ENCODE measurements at regions of chr6 and their contacts with region 1.

Region 1: GRCh38 chr6:14075095-14075503 is 42.5 kb upstream of the CD83 start:
- DNase-seq: no peak
- ATAC-seq: peak; percentile 79
- H3K4me3 ChIP-seq: peak overlapping the region; percentile 60
- H3K27ac ChIP-seq: peak overlapping the region; percentile 97
- H3K4me1 ChIP-seq: peaks cover 25% of the 10 kb centered on the region
- H3K27me3 ChIP-seq: no peaks in the 10 kb centered on the region
- CTCF ChIP-seq: no peak
- EP300 ChIP-seq: no peak; a peak in 1 of 4 replicates
- POLR2A ChIP-seq: peak; percentile 24; the same call in 1 of the 2 replicates
- RAD21 ChIP-seq: no peak

Region 2: DNA sequence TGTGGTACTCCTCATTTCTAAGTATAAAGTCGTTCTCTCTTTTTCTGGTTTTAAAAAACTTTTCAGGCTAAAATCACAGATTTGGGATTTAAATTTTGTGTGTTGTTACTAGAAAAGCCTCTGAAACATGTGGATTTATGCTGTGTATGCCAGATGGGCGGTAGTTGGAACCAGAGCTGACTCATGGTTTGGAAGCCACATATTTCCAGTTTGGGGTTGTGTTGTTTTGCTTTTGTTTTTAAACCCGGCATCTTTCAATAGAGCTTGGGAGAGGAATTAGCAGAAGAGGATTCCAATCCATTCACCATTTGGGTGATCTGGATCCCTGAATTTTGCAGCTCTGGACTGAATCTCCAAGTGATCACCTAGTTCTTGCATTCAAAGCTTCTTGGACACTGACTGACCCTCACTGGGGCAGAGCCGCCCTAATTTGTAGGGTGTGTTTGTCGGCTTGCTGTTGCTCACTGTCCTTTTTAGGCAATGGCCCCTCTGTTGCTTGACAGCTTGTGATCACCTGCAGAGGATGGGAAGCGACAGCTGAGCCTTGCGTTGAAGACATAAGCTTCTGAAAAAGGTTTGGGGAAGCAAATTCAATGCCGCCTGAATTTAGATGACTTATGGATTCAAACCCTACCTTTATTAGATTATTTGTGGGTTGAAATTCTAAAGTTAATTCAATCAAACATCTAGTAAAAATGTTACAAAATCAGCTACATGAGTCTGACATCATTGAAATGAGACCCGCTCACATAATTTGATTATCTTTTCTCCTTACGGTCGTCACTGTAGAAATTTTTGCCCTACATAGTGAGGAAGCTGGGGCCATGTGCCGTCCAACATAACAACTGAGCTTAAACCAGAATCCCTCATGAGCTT is 37.5 kb before region 1 on chr6:
- CTCF ChIA-PET with region 1: no interaction called
- POLR2A ChIA-PET with region 1: no interaction called
- RAD21 ChIA-PET with region 1: no interaction called
- SMC1A ChIA-PET with region 1: no interaction called
- in situ Hi-C with region 1: no loop called
- intact Hi-C with region 1: no loop called
- DNase-seq: no peak
- ATAC-seq: peak; percentile 16; the same call in 1 of the 3 replicates
- H3K4me3 ChIP-seq: no peak overlapping the region
- H3K27ac ChIP-seq: no peak overlapping the region
- H3K4me1 ChIP-seq: peaks cover 14% of the 10 kb centered on the region
- H3K27me3 ChIP-seq: no peaks in the 10 kb centered on the region; a peak in 1 of 4 replicates
- CTCF ChIP-seq: no peak
- EP300 ChIP-seq: no peak
- POLR2A ChIP-seq: no peak
- RAD21 ChIP-seq: no peak

Region 3: GRCh38 chr6:14089224-14089623 is 14.1 kb after region 1 on chr6:
- CTCF ChIA-PET with region 1: interaction called, 28 read pairs
- POLR2A ChIA-PET with region 1: interaction called, 13 read pairs
- RAD21 ChIA-PET with region 1: interaction called, 23 read pairs
- SMC1A ChIA-PET with region 1: interaction called, 226 read pairs
- in situ Hi-C with region 1: no loop called
- intact Hi-C with region 1: loop called (anchors 1 kb)
- DNase-seq: no peak
- ATAC-seq: peak; percentile 53
- H3K4me3 ChIP-seq: peak overlapping the region; percentile 4; the same call in 1 of the 2 replicates
- H3K27ac ChIP-seq: no peak overlapping the region
- H3K4me1 ChIP-seq: peaks cover 66% of the 10 kb centered on the region
- H3K27me3 ChIP-seq: no peaks in the 10 kb centered on the region
- CTCF ChIP-seq: no peak
- EP300 ChIP-seq: 0 out of 4 replicates have a peak, but pooled peaks of 1 of the 2 experiments have one; percentile 18
- POLR2A ChIP-seq: no peak
- RAD21 ChIP-seq: no peak

Region 4: GRCh38 chr6:14108571-14109410 is 33.7 kb after region 1 on chr6:
- CTCF ChIA-PET with region 1: interaction called, 25 read pairs
- POLR2A ChIA-PET with region 1: interaction called, 56 read pairs
- RAD21 ChIA-PET with region 1: interaction called, 61 read pairs
- SMC1A ChIA-PET with region 1: interaction called, 66 read pairs
- in situ Hi-C with region 1: no loop called
- intact Hi-C with region 1: loop called (anchors 2 kb)
- DNase-seq: peak; percentile 97
- ATAC-seq: peak; percentile 82
- H3K4me3 ChIP-seq: peak overlapping the region; percentile 32; the same call in 1 of the 2 replicates
- H3K27ac ChIP-seq: peak overlapping the region; percentile 85
- H3K4me1 ChIP-seq: peaks cover 43% of the 10 kb centered on the region
- H3K27me3 ChIP-seq: no peaks in the 10 kb centered on the region
- CTCF ChIP-seq: no peak
- EP300 ChIP-seq: peak; percentile 46 to 66; a peak in 3 of 4 replicates
- POLR2A ChIP-seq: peak; percentile 59
- RAD21 ChIP-seq: no peak

Region 5: GRCh38 chr6:14123386-14124111 is 48.5 kb after region 1 on chr6:
- CTCF ChIA-PET with region 1: interaction called, 33 read pairs
- POLR2A ChIA-PET with region 1: interaction called, 13 read pairs
- RAD21 ChIA-PET with region 1: interaction called, 19 read pairs
- SMC1A ChIA-PET with region 1: interaction called, 49 read pairs
- in situ Hi-C with region 1: no loop called
- intact Hi-C with region 1: loop called (anchors 2 kb)
- DNase-seq: no peak
- ATAC-seq: no peak
- H3K4me3 ChIP-seq: peak overlapping the region; percentile 48; the same call in 1 of the 2 replicates
- H3K27ac ChIP-seq: no peak overlapping the region
- H3K4me1 ChIP-seq: peaks cover 24% of the 10 kb centered on the region
- H3K27me3 ChIP-seq: no peaks in the 10 kb centered on the region
- CTCF ChIP-seq: no peak
- EP300 ChIP-seq: peak in 1 of 2 experiments; percentile 44; a peak in 1 of 4 replicates
- POLR2A ChIP-seq: no peak
- RAD21 ChIP-seq: no peak

Region 6: GRCh38 chr6:14144678-14145113 is 69.6 kb after region 1 on chr6:
- CTCF ChIA-PET with region 1: interaction called, 90 read pairs
- POLR2A ChIA-PET with region 1: no interaction called
- RAD21 ChIA-PET with region 1: interaction called, 3 read pairs
- SMC1A ChIA-PET with region 1: interaction called, 5 read pairs
- in situ Hi-C with region 1: no loop called
- intact Hi-C with region 1: no loop called
- DNase-seq: peak; percentile 40
- ATAC-seq: peak; percentile 92
- H3K4me3 ChIP-seq: no peak overlapping the region
- H3K27ac ChIP-seq: no peak overlapping the region
- H3K4me1 ChIP-seq: peaks cover 7% of the 10 kb centered on the region; the same call in 1 of the 2 replicates
- H3K27me3 ChIP-seq: no peaks in the 10 kb centered on the region
- CTCF ChIP-seq: peak; percentile 89 to 96 (median 94)
- EP300 ChIP-seq: no peak
- POLR2A ChIP-seq: no peak
- RAD21 ChIP-seq: peak; percentile 90

Region 7: GRCh38 chr6:14254505-14254904 is 179.4 kb after region 1 on chr6:
- CTCF ChIA-PET with region 1: no interaction called
- POLR2A ChIA-PET with region 1: no interaction called
- RAD21 ChIA-PET with region 1: no interaction called
- SMC1A ChIA-PET with region 1: no interaction called
- in situ Hi-C with region 1: no loop called
- intact Hi-C with region 1: no loop called
- DNase-seq: peak; percentile 53
- ATAC-seq: peak; percentile 90
- H3K4me3 ChIP-seq: no peak overlapping the region
- H3K27ac ChIP-seq: peak overlapping the region; percentile 37; the same call in 1 of the 2 replicates
- H3K4me1 ChIP-seq: peaks cover 9% of the 10 kb centered on the region
- H3K27me3 ChIP-seq: no peaks in the 10 kb centered on the region
- CTCF ChIP-seq: no peak
- EP300 ChIP-seq: no peak
- POLR2A ChIP-seq: no peak
- RAD21 ChIP-seq: no peak